CD4-positive, alpha-beta memory T cell (primary cell): ENCODE measurements at regions of chr11 and their contacts with region 1.

Region 1: GRCh38 chr11:119196833-119197483 is 9.2 kb upstream of the CBL start:
- DNase-seq: peak; percentile 73 to 79 (median 76)
- H3K4me3 ChIP-seq: no peak overlapping the region
- H3K4me3 Mint-ChIP-seq: peak overlapping the region in 1 of 8 donors; percentile 47
- H3K27ac ChIP-seq: no peak overlapping the region
- H3K27ac Mint-ChIP-seq: peak overlapping the region in 1 of 7 donors; percentile 43
- H3K4me1 ChIP-seq: no peaks in the 10 kb centered on the region
- H3K4me1 Mint-ChIP-seq: peaks cover 0 to 6% (median 3%) of the 10 kb centered on the region in 4 donors
- H3K27me3 ChIP-seq: no peaks in the 10 kb centered on the region
- H3K27me3 Mint-ChIP-seq: peaks cover 0 to 1% of the 10 kb centered on the region in 2 donors

Region 2: DNA sequence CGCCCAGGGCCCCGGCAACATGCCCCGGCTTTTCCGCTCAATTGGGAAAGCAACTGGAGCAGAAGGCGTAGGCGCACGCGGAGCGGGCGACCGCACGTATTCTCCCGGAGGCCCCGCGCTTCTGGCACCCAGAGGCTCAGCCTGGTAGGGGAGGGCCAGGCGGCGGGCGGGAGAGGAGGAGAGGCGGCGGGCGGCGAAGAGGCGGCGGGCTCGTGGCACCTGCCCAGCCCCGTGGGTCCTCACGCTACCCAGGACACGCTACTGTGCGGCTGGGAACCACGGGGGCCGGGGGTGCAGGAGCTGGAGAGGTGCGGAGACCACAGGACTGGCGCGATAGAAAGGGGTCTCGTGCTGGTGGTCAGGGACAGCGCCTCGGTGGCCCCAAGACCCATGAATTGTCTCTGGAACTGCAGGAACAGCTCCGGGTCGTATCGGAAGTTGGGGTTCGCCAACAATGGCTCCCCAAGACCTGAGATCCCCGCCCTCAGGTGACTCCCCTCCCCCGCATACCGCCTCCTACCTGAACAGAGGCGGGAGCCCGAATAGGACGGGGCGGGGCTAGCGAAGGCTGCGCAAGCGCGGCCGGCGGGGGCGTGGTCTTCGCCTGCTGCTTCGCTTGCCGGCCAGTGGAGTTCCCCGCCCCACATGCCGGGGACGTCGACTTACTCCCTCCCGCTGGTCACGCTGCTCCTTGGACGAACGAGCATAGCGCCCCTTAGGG is 166.5 kb before region 1 on chr11 and contains the start of gene SLC37A4:
- CTCF ChIA-PET with region 1: interaction called, 10 read pairs
- POLR2A ChIA-PET with region 1: no interaction called
- intact Hi-C with region 1: no loop called
- DNase-seq: peak; percentile 98 to 99 (median 99)
- H3K4me3 ChIP-seq: peak within 1 kb of the TSS; percentile 61 to 91
- H3K4me3 Mint-ChIP-seq: peak within 1 kb of the TSS; percentile 78 to 91 (median 82)
- H3K27ac ChIP-seq: peak within 1 kb of the TSS; percentile 76
- H3K27ac Mint-ChIP-seq: peak within 1 kb of the TSS; percentile 64 to 95 (median 93)
- H3K4me1 ChIP-seq: peaks cover 19% of the 10 kb centered on the region
- H3K4me1 Mint-ChIP-seq: peaks cover 14 to 40% (median 19%) of the 10 kb centered on the region in 4 donors
- H3K27me3 ChIP-seq: no peaks in the 10 kb centered on the region
- H3K27me3 Mint-ChIP-seq: no peaks in the 10 kb centered on the region
- total RNA-seq, gene SLC37A4: 14.6 to 14.8 TPM

Region 3: GRCh38 chr11:119084663-119085436 is 112.1 kb before region 1 on chr11 and contains the start of gene HMBS:
- CTCF ChIA-PET with region 1: interaction called, 11 read pairs
- POLR2A ChIA-PET with region 1: no interaction called
- intact Hi-C with region 1: no loop called
- DNase-seq: peak; percentile 88 to 93 (median 89)
- H3K4me3 ChIP-seq: peak within 1 kb of the TSS; percentile 83 to 90
- H3K4me3 Mint-ChIP-seq: peak within 1 kb of the TSS; percentile 92 to 96 (median 94)
- H3K27ac ChIP-seq: peak within 1 kb of the TSS; percentile 76
- H3K27ac Mint-ChIP-seq: peak within 1 kb of the TSS; percentile 93 to 98 (median 96)
- H3K4me1 ChIP-seq: peaks cover 13% of the 10 kb centered on the region
- H3K4me1 Mint-ChIP-seq: peaks cover 9 to 19% (median 14%) of the 10 kb centered on the region in 4 donors
- H3K27me3 ChIP-seq: no peaks in the 10 kb centered on the region
- H3K27me3 Mint-ChIP-seq: no peaks in the 10 kb centered on the region
- total RNA-seq, gene HMBS: 5.1 to 5.8 TPM

Region 4: GRCh38 chr11:119168471-119169281 is 28.3 kb before region 1 on chr11 and contains the start of gene NLRX1:
- CTCF ChIA-PET with region 1: interaction called, 32 read pairs
- POLR2A ChIA-PET with region 1: interaction called, 3 read pairs
- intact Hi-C with region 1: loop called (anchors 1 kb)
- DNase-seq: peak; percentile 81 to 83 (median 82)
- H3K4me3 ChIP-seq: peak within 1 kb of the TSS; percentile 78 to 79
- H3K4me3 Mint-ChIP-seq: peak within 1 kb of the TSS; percentile 89 to 91 (median 90)
- H3K27ac ChIP-seq: peak within 1 kb of the TSS; percentile 67
- H3K27ac Mint-ChIP-seq: peak within 1 kb of the TSS; percentile 68 to 90 (median 89)
- H3K4me1 ChIP-seq: peaks cover 6% of the 10 kb centered on the region
- H3K4me1 Mint-ChIP-seq: peaks cover 1 to 10% (median 8%) of the 10 kb centered on the region in 4 donors
- H3K27me3 ChIP-seq: no peaks in the 10 kb centered on the region
- H3K27me3 Mint-ChIP-seq: no peaks in the 10 kb centered on the region
- total RNA-seq, gene NLRX1: 8.8 to 9.2 TPM

Region 5: GRCh38 chr11:119284344-119285157 is 87.6 kb after region 1 on chr11:
- CTCF ChIA-PET with region 1: interaction called, 13 read pairs
- POLR2A ChIA-PET with region 1: no interaction called
- intact Hi-C with region 1: loop called (anchors 2 kb)
- DNase-seq: peak in 4 of 5 donors; percentile 62 to 64 (median 62)
- H3K4me3 ChIP-seq: no peak overlapping the region
- H3K4me3 Mint-ChIP-seq: peak overlapping the region in 1 of 8 donors; percentile 20
- H3K27ac ChIP-seq: no peak overlapping the region
- H3K27ac Mint-ChIP-seq: peak overlapping the region in 6 of 7 donors; percentile 30 to 87 (median 76)
- H3K4me1 ChIP-seq: peaks cover 9% of the 10 kb centered on the region
- H3K4me1 Mint-ChIP-seq: peaks cover 17 to 30% (median 21%) of the 10 kb centered on the region in 4 donors
- H3K27me3 ChIP-seq: no peaks in the 10 kb centered on the region
- H3K27me3 Mint-ChIP-seq: no peaks in the 10 kb centered on the region